ENCODE measurements at regions of chr2 and their contacts with region 1.

Region 1: DNA sequence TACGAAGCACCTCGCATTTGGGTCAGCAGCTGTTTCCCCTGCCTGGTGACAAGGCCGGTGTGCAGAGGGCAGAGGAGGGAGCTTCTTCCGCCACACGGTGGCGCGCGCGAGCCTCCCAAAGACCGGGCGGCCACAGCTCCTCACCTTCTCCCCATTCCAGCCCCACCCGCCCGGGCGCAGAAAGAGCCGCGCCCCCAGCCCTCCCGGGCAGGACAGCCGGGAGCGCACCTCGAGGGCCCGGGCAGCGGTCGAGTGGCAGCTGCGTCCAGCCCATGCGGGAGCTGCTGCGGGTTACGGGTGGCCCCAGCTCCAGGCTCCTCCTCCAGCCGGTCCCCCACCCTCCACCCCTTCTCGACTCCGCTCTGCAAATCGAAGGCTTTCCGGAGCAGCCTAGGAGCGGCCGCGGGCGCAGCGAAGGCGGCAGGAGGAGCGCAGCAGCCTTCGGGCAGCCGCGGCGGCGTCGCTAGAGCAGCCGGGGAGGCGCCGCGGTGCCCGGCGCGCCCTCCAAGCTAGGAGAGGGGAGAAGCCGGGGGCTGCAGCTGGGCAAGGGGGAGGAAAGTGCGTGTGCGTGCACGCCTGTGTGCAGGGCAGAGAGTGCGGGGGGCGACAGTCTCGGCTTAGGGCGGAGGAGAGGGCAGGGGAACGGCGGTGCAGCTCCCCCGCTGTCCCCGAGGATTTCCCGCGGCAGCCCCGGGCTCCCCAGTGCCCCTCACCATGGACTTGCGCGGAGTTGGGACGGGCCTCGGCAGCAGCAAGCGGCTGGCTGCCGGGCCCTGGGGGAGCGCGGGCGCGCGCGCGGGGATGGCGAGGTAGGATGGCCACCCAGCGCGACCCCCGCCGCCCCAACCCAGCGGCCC is at the start of gene CCDC85A:
- DNase-seq: peak; percentile 81
- H3K4me3 ChIP-seq: peak within 1 kb of the TSS; percentile 39 to 49
- H3K27ac ChIP-seq: peak within 1 kb of the TSS; percentile 21 to 33
- H3K4me1 ChIP-seq: no peaks in the 10 kb centered on the region
- H3K27me3 ChIP-seq: no peaks in the 10 kb centered on the region
- CTCF ChIP-seq: peak; percentile 79 to 94 (median 84)
- POLR2A ChIP-seq: no peak
- total RNA-seq, gene CCDC85A: 1.5 to 4.5 TPM

Region 2: DNA sequence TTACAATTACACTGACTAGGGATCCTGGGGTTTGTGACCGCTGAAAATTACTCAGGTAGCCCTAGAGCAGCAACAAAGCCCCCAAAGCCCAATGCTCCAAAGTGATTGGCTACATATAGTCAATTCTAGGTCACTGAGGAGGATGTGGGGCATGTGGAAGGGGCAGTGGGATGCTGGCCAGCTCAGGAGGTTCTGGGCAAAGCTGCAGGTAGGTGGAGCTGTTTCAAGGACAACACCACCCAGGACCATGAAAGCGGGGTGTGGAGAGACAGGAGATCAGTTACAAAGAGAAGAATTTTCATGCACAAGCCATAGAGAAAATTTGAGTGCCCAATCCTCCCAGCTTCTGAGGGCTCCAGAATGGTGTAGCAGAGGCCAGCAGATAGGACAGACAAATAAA is 75.1 kb before region 1 on chr2:
- intact Hi-C with region 1: no loop called
- DNase-seq: no peak
- H3K4me3 ChIP-seq: no peak overlapping the region
- H3K27ac ChIP-seq: no peak overlapping the region
- H3K4me1 ChIP-seq: no peaks in the 10 kb centered on the region
- H3K27me3 ChIP-seq: no peaks in the 10 kb centered on the region
- CTCF ChIP-seq: no peak
- POLR2A ChIP-seq: no peak

Region 3: DNA sequence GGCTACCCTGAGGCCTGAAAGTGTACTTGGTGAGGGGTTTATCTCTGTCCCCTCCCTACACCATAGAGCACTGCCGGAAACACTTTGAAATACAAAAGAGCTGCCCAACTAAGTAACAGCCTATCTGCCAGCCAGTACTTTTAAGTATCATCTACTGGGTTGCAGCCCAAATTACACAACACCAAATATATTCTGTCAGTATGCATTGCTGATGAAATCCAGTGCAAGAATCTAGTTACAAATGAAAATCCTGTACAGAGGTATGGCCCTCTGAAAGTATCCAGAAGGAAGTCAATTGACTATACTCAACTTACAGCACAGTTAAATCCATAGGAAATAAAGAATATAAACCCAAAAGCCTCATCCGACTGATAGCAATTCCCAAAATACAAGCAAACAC is 280.7 kb after region 1 on chr2:
- intact Hi-C with region 1: loop called (anchors 10 kb)
- DNase-seq: no peak
- H3K4me3 ChIP-seq: no peak overlapping the region
- H3K27ac ChIP-seq: no peak overlapping the region
- H3K4me1 ChIP-seq: no peaks in the 10 kb centered on the region
- H3K27me3 ChIP-seq: no peaks in the 10 kb centered on the region
- CTCF ChIP-seq: no peak
- POLR2A ChIP-seq: no peak

Region 4: GRCh38 chr2:56749152-56749752 is 565.4 kb after region 1 on chr2:
- intact Hi-C with region 1: loop called (anchors 2 kb)
- DNase-seq: no peak
- H3K4me3 ChIP-seq: no peak overlapping the region
- H3K27ac ChIP-seq: no peak overlapping the region
- H3K4me1 ChIP-seq: no peaks in the 10 kb centered on the region
- H3K27me3 ChIP-seq: no peaks in the 10 kb centered on the region
- CTCF ChIP-seq: peak in 3 of 4 experiments; percentile 46 to 61 (median 53)
- POLR2A ChIP-seq: no peak

Region 5: DNA sequence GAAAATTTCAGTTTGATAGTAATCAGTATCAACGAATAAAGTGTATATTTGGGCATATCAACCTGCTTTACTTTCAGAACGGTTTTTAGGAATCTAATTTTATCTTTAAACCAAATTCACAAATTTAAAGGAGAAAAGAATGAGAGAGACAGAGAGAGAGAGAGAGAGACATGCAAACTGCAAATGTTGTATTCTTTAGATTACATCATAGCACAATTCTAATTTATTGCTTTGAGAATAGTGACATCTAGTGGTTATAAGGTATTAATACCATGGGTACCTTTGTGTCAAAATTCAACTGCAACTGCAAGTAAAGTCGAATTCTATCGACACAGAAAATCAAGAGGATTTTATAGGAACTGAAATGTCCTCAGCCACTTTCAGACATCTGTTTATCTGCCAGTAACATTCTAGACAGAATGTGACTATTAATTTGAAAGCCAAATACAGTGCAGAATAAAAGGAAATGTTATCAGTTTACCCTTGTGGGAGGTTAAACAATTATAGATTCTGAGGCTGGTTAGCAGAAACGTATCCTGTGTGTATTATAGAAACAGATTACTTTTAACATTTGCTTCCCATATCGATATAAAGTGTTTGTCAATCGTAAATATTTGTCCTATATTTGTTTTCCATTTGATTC is 1332.9 kb after region 1 on chr2:
- intact Hi-C with region 1: loop called (anchors 5 kb)
- DNase-seq: no peak
- H3K4me3 ChIP-seq: no peak overlapping the region
- H3K27ac ChIP-seq: no peak overlapping the region
- H3K4me1 ChIP-seq: no peaks in the 10 kb centered on the region
- H3K27me3 ChIP-seq: no peaks in the 10 kb centered on the region
- CTCF ChIP-seq: peak; percentile 35 to 70 (median 69)
- POLR2A ChIP-seq: no peak

Measured in prostate gland (tissue), 2 donors.